PC-9 (cell line): ENCODE measurements at regions of chr1 and their contacts with region 1.

Region 1: GRCh38 chr1:101769520-101769919 is 227.2 kb downstream of the OLFM3 start:
- DNase-seq: no peak
- H3K4me3 ChIP-seq: no peak overlapping the region
- H3K27ac ChIP-seq: no peak overlapping the region
- H3K4me1 ChIP-seq: no peaks in the 10 kb centered on the region
- H3K27me3 ChIP-seq: no peaks in the 10 kb centered on the region
- CTCF ChIP-seq: peak; percentile 79

Region 2: GRCh38 chr1:101506541-101507164 is 262.9 kb before region 1 on chr1:
- CTCF ChIA-PET with region 1: no interaction called
- POLR2A ChIA-PET with region 1: no interaction called
- intact Hi-C with region 1: no loop called
- DNase-seq: no peak
- H3K4me3 ChIP-seq: no peak overlapping the region
- H3K27ac ChIP-seq: no peak overlapping the region
- H3K4me1 ChIP-seq: no peaks in the 10 kb centered on the region
- H3K27me3 ChIP-seq: no peaks in the 10 kb centered on the region
- CTCF ChIP-seq: peak; percentile 89

Region 3: GRCh38 chr1:101833312-101833711 is 63.8 kb after region 1 on chr1:
- CTCF ChIA-PET with region 1: no interaction called
- POLR2A ChIA-PET with region 1: no interaction called
- intact Hi-C with region 1: loop called (anchors 10 kb)
- DNase-seq: peak in 1 of 2 experiments; percentile 38
- H3K4me3 ChIP-seq: no peak overlapping the region
- H3K27ac ChIP-seq: no peak overlapping the region
- H3K4me1 ChIP-seq: no peaks in the 10 kb centered on the region
- H3K27me3 ChIP-seq: no peaks in the 10 kb centered on the region
- CTCF ChIP-seq: no peak

Region 4: GRCh38 chr1:102032534-102032933 is 263.0 kb after region 1 on chr1:
- CTCF ChIA-PET with region 1: no interaction called
- POLR2A ChIA-PET with region 1: no interaction called
- intact Hi-C with region 1: no loop called
- DNase-seq: no peak
- H3K4me3 ChIP-seq: no peak overlapping the region
- H3K27ac ChIP-seq: no peak overlapping the region
- H3K4me1 ChIP-seq: no peaks in the 10 kb centered on the region
- H3K27me3 ChIP-seq: no peaks in the 10 kb centered on the region
- CTCF ChIP-seq: no peak